ENCODE measurements at regions of chr1 and their contacts with region 1.

Region 1: GRCh38 chr1:11478571-11479374 is at the start of gene DISP3:
- DNase-seq: peak; percentile 99
- H3K4me3 ChIP-seq: peak within 1 kb of the TSS; percentile 66 to 75
- H3K27ac ChIP-seq: peak within 1 kb of the TSS in 1 of 2 experiments; percentile 89; a peak in 2 of 4 replicates
- H3K4me1 ChIP-seq: peaks cover 0 to 50% of the 10 kb centered on the region in 2 experiments; a peak in 2 of 4 replicates
- H3K27me3 ChIP-seq: no peaks in the 10 kb centered on the region
- CTCF ChIP-seq: peak; percentile 62
- EP300 ChIP-seq: peak in 1 of 2 experiments; percentile 55; a peak in 1 of 4 replicates
- RAD21 ChIP-seq: peak; percentile 50
- polyA plus RNA-seq, gene DISP3: 0.08 and 0.15 TPM in 2 replicates

Region 2: GRCh38 chr1:11320153-11320936 is 158.4 kb before region 1 on chr1:
- CTCF ChIA-PET with region 1: interaction called, 10 read pairs
- POLR2A ChIA-PET with region 1: interaction called, 5 read pairs
- DNase-seq: peak; percentile 76
- H3K4me3 ChIP-seq: no peak overlapping the region
- H3K27ac ChIP-seq: no peak overlapping the region
- H3K4me1 ChIP-seq: peaks cover 0 to 24% of the 10 kb centered on the region in 2 experiments; a peak in 1 of 4 replicates
- H3K27me3 ChIP-seq: no peaks in the 10 kb centered on the region
- CTCF ChIP-seq: peak; percentile 62
- EP300 ChIP-seq: no peak
- RAD21 ChIP-seq: peak; percentile 54

Region 3: DNA sequence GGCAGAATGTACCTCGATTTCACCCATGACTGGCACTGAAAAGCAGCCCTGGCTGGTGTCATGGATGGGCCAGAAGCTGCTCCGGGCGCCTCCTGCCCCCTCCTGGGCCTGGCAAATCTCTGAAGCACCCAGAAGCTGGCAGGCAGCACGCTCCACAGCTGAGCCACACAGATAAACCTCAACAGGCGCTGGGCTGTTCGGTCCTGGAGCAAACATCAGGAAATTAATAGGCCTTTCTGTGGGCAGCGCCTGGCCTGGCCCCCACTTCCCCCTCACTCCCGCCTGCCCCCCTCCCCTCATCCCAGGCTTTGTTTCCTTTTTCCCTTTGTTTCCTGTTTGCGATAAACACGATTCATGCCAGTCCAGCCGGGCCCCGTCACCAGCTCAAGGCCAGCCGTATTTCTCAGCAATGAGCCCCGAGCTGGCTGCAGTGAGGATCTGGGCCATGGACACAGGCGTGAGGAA is 19.9 kb before region 1 on chr1:
- CTCF ChIA-PET with region 1: interaction called, 63 read pairs
- POLR2A ChIA-PET with region 1: interaction called, 26 read pairs
- DNase-seq: peak; percentile 90
- H3K4me3 ChIP-seq: no peak overlapping the region
- H3K27ac ChIP-seq: peak overlapping the region in 1 of 2 experiments; percentile 90; a peak in 2 of 4 replicates
- H3K4me1 ChIP-seq: peaks cover 0 to 61% of the 10 kb centered on the region in 2 experiments; a peak in 2 of 4 replicates
- H3K27me3 ChIP-seq: peaks cover 7% of the 10 kb centered on the region; the same call in 1 of the 2 replicates
- CTCF ChIP-seq: no peak
- EP300 ChIP-seq: peak in 1 of 2 experiments; percentile 89; a peak in 2 of 4 replicates
- RAD21 ChIP-seq: peak; percentile 64

Region 4: DNA sequence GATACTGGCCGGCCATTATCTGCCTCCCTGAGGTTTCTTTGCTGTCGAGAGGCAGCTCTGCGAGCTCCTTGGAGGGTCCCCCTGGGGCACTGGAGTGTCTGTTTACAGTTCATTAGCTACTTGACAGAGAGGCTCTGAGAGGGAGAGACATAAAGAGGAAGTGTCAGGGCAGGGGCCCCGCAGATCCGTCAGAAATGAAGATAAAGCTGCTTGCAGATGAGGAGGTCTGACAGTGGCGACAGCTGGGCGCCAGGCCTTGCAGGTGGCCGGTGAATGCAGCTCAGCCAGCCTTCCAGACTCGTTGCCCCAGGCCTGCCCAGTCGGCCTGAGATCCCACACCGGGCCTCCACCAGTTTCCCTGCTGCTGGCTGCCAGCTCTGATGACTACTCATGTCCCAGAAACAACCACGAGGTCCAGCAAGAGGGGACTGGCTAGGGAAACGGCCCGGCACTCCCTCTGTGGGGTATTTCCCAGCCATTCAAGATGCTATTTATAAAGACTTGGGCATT is 84.8 kb after region 1 on chr1:
- CTCF ChIA-PET with region 1: interaction called, 7 read pairs
- POLR2A ChIA-PET with region 1: interaction called, 10 read pairs
- DNase-seq: peak; percentile 89
- H3K4me3 ChIP-seq: no peak overlapping the region
- H3K27ac ChIP-seq: peak overlapping the region in 1 of 2 experiments; percentile 97; a peak in 2 of 4 replicates
- H3K4me1 ChIP-seq: peaks cover 0 to 41% of the 10 kb centered on the region in 2 experiments; a peak in 2 of 4 replicates
- H3K27me3 ChIP-seq: no peaks in the 10 kb centered on the region; the same call in 1 of the 2 replicates
- CTCF ChIP-seq: no peak
- EP300 ChIP-seq: peak in 1 of 2 experiments; percentile 87; a peak in 2 of 4 replicates
- RAD21 ChIP-seq: no peak